Right lobe of liver (tissue), 6 donors: ENCODE measurements at regions of chr11 and their contacts with region 1.

Region 1: GRCh38 chr11:18731949-18732821 is 6.2 kb upstream of the IGSF22 start:
- DNase-seq: peak in 1 of 3 donors; percentile 48
- ATAC-seq: peak; percentile 62 to 84 (median 78)
- H3K4me3 ChIP-seq: no peak overlapping the region
- H3K27ac ChIP-seq: no peak overlapping the region
- H3K4me1 ChIP-seq: no peaks in the 10 kb centered on the region
- H3K27me3 ChIP-seq: no peaks in the 10 kb centered on the region
- CTCF ChIP-seq: peak; percentile 84 to 97 (median 94)
- POLR2A ChIP-seq: no peak

Region 2: DNA sequence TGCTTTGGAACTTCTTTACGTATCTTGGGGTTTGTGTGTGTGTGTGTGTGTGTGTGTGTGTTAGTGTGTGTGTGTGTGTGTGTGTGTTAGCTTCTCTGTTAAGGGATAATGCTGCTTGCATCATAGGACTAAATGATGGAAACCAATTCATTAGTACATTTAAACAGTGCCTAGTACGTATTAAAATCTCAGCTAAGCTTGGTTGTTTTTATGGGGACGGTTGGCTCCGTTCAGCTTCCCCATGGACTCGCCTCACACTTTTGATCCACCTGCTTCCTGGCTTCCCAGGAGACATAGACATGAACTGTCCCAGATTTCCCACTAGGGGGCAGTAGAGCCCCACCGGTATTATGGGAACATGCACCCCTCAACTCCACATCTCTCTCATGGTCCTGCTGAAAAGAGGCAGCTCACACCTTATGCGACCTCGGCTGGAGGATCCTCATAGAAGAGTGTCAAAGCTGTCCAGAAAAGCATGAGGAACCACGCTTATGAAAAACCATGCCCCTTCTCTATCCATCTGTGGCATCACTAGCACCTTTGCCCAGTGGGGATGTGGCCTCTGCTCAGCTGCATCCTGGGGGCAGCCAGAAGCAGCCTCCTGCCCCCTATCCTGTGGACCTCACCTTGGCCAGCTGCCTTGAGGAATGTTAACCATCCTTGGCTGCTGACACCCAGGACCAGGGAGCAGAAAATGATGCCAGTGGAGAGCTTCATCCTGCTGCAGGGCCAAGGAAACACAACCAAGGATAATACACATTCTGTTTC is 616.6 kb before region 1 on chr11:
- intact Hi-C with region 1: loop called in 1 of 2 experiments (anchors 5 kb)
- DNase-seq: peak in 2 of 3 donors; percentile 43 to 70
- ATAC-seq: peak; percentile 95 to 98 (median 95)
- H3K4me3 ChIP-seq: no peak overlapping the region
- H3K27ac ChIP-seq: no peak overlapping the region
- H3K4me1 ChIP-seq: no peaks in the 10 kb centered on the region
- H3K27me3 ChIP-seq: no peaks in the 10 kb centered on the region
- CTCF ChIP-seq: peak; percentile 79 to 92 (median 90)
- POLR2A ChIP-seq: no peak